ENCODE measurements at regions of chr16 and their contacts with region 1.

Region 1: DNA sequence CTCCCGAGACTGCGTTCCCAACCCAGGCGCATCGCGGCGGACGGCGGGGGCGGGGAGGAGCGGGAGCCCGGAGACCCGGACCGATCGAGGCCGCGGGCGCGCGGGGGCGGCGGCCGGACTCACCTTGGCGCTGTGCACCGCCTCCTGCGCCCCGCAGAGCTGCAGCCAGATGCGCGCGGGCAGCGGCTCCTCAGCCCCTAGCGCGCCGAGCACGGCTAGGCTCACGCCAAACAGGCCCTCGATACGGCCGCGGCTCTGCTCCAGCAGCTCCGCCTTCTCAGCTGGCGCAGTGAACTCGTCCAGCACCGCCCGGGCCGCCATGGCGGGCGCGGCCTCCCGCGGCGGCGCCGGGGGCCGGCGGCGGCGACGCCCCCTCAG is 339 bp downstream of the N4BP1 start:
- DNase-seq: no peak
- H3K4me3 Mint-ChIP-seq: peak overlapping the region; percentile 89
- H3K27ac Mint-ChIP-seq: peak overlapping the region; percentile 86
- H3K4me1 Mint-ChIP-seq: peaks cover 39% of the 10 kb centered on the region
- H3K27me3 Mint-ChIP-seq: no peaks in the 10 kb centered on the region

Region 2: GRCh38 chr16:46973207-46973995 is 1636.2 kb before region 1 on chr16 and contains the start of gene DNAJA2:
- intact Hi-C with region 1: loop called (anchors 10 kb)
- DNase-seq: peak; percentile 87
- H3K4me3 Mint-ChIP-seq: peak within 1 kb of the TSS; percentile 98
- H3K27ac Mint-ChIP-seq: peak within 1 kb of the TSS; percentile 96
- H3K4me1 Mint-ChIP-seq: peaks cover 45% of the 10 kb centered on the region
- H3K27me3 Mint-ChIP-seq: no peaks in the 10 kb centered on the region
- total RNA-seq, gene DNAJA2: 65.9 and 74.4 TPM in 2 replicates

Region 3: GRCh38 chr16:48385272-48386150 is 224.1 kb before region 1 on chr16 and contains the start of gene SIAH1:
- intact Hi-C with region 1: loop called (anchors 2 kb)
- DNase-seq: peak; percentile 86
- H3K4me3 Mint-ChIP-seq: peak within 1 kb of the TSS; percentile 94
- H3K27ac Mint-ChIP-seq: peak within 1 kb of the TSS; percentile 92
- H3K4me1 Mint-ChIP-seq: peaks cover 23% of the 10 kb centered on the region
- H3K27me3 Mint-ChIP-seq: no peaks in the 10 kb centered on the region
- total RNA-seq, gene SIAH1: 16.2 and 17.0 TPM in 2 replicates

Region 4: GRCh38 chr16:48556913-48557351 is 52.7 kb before region 1 on chr16:
- intact Hi-C with region 1: loop called (anchors 1 kb)
- DNase-seq: no peak
- H3K4me3 Mint-ChIP-seq: no peak overlapping the region
- H3K27ac Mint-ChIP-seq: peak overlapping the region; percentile 77
- H3K4me1 Mint-ChIP-seq: peaks cover 76% of the 10 kb centered on the region
- H3K27me3 Mint-ChIP-seq: no peaks in the 10 kb centered on the region

Region 5: GRCh38 chr16:48623304-48624016 is 13.8 kb after region 1 on chr16:
- intact Hi-C with region 1: loop called (anchors 1 kb)
- DNase-seq: peak; percentile 76
- H3K4me3 Mint-ChIP-seq: peak overlapping the region; percentile 79
- H3K27ac Mint-ChIP-seq: peak overlapping the region; percentile 66
- H3K4me1 Mint-ChIP-seq: peaks cover 25% of the 10 kb centered on the region
- H3K27me3 Mint-ChIP-seq: peaks cover 4% of the 10 kb centered on the region